Heart left ventricle (tissue), 16 donors: ENCODE measurements at regions of chr14 and their contacts with region 1.

Region 1: GRCh38 chr14:52080817-52081755 is 12.2 kb upstream of the NID2 start:
- DNase-seq: no peak
- ATAC-seq: peak in 3 of 4 donors; percentile 55 to 68 (median 67)
- H3K4me3 ChIP-seq: no peak overlapping the region
- H3K27ac ChIP-seq: peak overlapping the region in 4 of 12 donors; percentile 12 to 35 (median 17)
- H3K4me1 ChIP-seq: peaks cover 0 to 38% (median 20%) of the 10 kb centered on the region in 12 donors
- H3K27me3 ChIP-seq: no peaks in the 10 kb centered on the region
- CTCF ChIP-seq: no peak
- POLR2A ChIP-seq: no peak

Region 2: DNA sequence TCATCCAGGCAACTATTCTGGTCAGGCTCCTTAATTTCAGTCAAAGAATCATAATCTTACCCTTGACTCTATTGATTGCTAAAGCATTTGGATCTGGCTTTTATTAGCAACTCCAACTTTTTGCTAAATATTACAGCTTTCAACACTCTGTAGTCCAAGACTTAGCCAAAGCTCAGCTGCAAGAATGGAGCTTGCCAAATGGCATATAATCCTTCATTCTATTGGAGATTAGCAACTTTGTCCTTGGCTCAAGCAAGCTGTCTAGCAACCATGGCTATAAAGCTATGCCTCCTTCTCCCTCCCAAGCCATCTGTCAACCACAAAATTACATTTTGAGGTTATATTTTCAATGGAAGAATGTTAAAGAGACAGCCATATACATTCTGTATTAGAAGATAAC is 10.8 kb after region 1 on chr14:
- intact Hi-C with region 1: loop called in 1 of 10 experiments (anchors 2 kb)
- DNase-seq: no peak
- ATAC-seq: no peak
- H3K4me3 ChIP-seq: no peak overlapping the region
- H3K27ac ChIP-seq: no peak overlapping the region
- H3K4me1 ChIP-seq: peaks cover 0 to 21% (median 5%) of the 10 kb centered on the region in 12 donors
- H3K27me3 ChIP-seq: no peaks in the 10 kb centered on the region
- CTCF ChIP-seq: no peak
- POLR2A ChIP-seq: no peak

Region 3: DNA sequence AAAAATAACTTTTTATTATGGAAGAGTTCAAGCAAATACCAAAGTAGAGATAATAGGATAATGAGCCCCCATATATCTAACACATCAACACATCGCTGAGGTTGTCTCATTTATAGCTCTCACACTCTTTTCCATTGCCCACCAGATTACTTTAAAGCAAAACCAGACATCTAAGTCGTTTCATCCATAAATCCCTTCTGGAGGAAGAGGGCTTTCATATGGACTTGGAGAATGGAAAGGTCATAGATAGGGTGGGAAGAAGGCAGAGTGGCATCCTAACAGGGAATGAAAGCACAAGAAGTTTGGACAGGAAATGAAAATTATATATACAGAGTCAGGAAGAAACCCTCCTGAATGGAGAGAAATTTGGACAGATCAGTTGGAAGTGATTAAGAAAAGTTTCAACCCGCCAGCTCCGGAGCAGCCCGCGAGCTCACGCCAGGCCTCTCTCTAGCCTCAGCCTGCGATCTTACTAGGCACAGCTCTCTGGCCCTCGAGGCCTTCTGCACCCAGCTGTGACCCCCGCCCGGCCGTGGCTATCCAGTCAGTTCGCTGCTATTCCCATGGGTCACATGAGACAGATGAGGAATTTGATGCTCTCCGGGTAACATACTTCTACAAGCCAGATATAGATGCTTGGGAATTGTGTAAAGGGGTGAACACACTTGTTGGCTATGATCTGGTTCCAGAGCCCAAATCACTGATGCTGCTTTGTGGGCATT is 36.2 kb after region 1 on chr14:
- intact Hi-C with region 1: loop called in 3 of 10 experiments (anchors 5 to 10 kb)
- DNase-seq: peak in 3 of 5 donors; percentile 38 to 64 (median 61)
- ATAC-seq: peak in 1 of 4 donors; percentile 55
- H3K4me3 ChIP-seq: no peak overlapping the region
- H3K27ac ChIP-seq: peak overlapping the region in 2 of 12 donors; percentile 5 to 38
- H3K4me1 ChIP-seq: no peaks in the 10 kb centered on the region
- H3K27me3 ChIP-seq: no peaks in the 10 kb centered on the region
- CTCF ChIP-seq: no peak
- POLR2A ChIP-seq: no peak